Dorsolateral prefrontal cortex (tissue), 120 donors: ENCODE measurements at regions of chr1 and their contacts with region 1.

Region 1: GRCh38 chr1:62082456-62083363 is 111.9 kb upstream of the L1TD1 start:
- DNase-seq: peak in 4 of 10 donors; percentile 35 to 55 (median 48)
- H3K4me3 ChIP-seq: no peak overlapping the region
- H3K27ac ChIP-seq: no peak overlapping the region
- H3K27me3 ChIP-seq: no peaks in the 10 kb centered on the region
- CTCF ChIP-seq: peak; percentile 64 to 92 (median 84)

Region 2: DNA sequence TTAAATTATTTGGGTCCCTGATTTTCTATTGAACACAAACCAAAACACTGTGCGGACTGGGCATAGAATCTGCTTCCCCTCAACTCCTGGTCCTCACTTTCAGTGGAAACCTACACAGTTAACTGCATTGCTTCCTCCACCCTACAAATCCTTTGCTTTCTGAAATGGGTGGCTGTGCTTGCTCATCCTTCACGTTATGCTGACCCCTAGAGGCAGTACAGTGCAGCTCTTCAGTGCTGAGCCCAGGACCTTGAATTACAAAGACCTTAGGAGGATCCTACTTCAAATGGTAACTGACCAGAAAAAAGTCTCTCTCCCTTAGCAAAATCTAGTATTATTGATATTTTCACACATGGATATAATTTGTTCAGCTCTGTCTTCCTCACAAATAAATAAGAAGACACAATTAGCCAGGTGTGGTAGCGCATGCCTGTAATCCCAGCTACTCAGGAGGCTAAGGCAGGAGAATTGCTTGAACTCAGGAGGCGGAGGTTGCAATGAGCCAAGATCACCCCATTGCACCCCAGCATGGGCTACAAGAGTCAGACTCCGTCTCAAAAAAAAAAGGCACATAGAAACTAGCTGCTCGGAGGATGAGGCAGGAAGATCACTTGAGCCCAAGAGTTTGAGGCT is 48.5 kb after region 1 on chr1:
- intact Hi-C with region 1: loop called in 1 of 2 experiments (anchors 5 kb)
- DNase-seq: peak in 6 of 10 donors; percentile 23 to 56 (median 45)
- H3K4me3 ChIP-seq: no peak overlapping the region
- H3K27ac ChIP-seq: no peak overlapping the region
- H3K27me3 ChIP-seq: no peaks in the 10 kb centered on the region
- CTCF ChIP-seq: peak; percentile 40 to 87 (median 76)